Brain microvascular endothelial cell (primary cell): ENCODE measurements at regions of chr2 and their contacts with region 1.

Region 1: GRCh38 chr2:188978291-188979081 is 4.3 kb downstream of the COL3A1 start:
- DNase-seq: peak; percentile 70
- H3K4me3 ChIP-seq: peak overlapping the region; percentile 7
- H3K27ac ChIP-seq: peak overlapping the region; percentile 78
- H3K27me3 ChIP-seq: no peaks in the 10 kb centered on the region
- CTCF ChIP-seq: peak; percentile 56

Region 2: DNA sequence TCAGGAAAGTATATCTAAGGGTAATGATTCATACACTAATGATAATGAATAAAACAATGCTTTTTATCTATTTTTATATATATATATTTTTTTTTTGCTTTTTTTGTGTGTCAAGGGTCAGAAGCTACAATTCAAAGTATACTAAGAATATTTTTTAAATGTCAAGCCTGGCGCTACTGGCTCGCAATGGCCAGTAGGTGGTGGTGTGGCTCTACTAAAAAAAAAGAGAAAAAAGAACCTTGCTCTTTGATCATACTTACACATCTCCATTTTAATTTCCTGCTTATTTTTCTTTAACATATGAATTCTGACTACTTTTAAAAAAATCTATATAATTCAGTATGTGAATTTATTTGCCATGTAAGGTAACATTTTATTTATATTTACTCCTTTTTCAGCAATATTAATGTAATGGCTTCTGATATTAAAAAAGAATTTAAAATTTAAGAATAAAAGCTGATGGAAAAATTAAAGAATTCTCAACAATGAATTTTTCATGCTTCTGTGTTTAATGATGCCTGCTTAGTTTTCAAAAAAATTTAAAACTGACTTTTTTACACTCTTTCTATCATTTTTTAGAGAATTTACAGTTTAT is 453.9 kb before region 1 on chr2:
- in situ Hi-C with region 1: loop called (anchors 25 kb)
- DNase-seq: peak; percentile 33
- H3K4me3 ChIP-seq: no peak overlapping the region
- H3K27ac ChIP-seq: no peak overlapping the region
- H3K27me3 ChIP-seq: no peaks in the 10 kb centered on the region
- CTCF ChIP-seq: peak; percentile 77

Region 3: DNA sequence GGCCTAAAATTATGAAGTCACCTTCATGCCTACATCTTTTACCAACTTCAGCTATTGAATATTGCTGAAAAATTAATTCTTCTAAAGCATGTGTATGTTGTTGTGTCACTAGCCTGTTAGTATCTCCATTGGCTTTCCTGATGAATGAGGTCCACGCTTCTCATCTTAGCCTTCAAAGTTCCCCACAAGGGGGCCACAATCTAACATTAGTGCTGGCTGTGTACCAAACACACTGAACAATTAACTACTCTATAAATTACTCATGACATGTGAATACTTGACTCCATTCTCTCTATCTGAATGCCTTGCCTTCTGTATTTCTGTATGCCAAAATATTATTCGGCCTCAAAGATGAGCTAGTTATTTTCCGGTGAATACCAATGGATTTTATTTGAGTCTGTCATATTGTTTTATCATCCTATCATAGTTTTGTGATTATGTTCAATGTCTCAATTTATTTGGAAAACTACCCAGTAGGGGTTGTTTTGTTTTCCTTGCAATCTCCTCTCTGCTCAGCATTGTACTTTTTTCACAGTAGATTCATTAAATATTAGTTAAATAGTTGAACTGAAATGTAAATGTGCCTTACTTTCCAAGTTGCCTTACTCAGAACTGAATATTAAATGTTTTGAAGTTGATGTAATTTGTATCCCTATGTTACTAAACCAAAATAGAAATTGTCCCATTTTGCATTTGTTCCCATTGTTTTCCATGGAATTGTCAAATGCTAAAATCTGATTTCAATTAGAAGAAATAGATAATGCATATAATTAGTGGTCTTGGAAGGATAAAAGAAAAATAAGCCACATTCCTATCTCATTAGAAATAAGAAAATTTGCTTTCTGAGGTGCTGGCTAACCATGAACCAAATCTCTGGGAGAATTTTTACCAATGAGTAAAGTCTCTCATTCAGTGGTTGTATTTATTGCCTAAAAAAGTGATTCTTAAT is 212.7 kb before region 1 on chr2:
- in situ Hi-C with region 1: no loop called
- DNase-seq: peak; percentile 54
- H3K4me3 ChIP-seq: no peak overlapping the region
- H3K27ac ChIP-seq: no peak overlapping the region
- H3K27me3 ChIP-seq: no peaks in the 10 kb centered on the region
- CTCF ChIP-seq: peak; percentile 68

Region 4: GRCh38 chr2:188811522-188811921 is 167.0 kb before region 1 on chr2:
- in situ Hi-C with region 1: no loop called
- DNase-seq: peak; percentile 50
- H3K4me3 ChIP-seq: no peak overlapping the region
- H3K27ac ChIP-seq: peak overlapping the region; percentile 60
- H3K27me3 ChIP-seq: no peaks in the 10 kb centered on the region
- CTCF ChIP-seq: no peak